A673 (cell line): ENCODE measurements at regions of chr5 and their contacts with region 1.

Region 1: DNA sequence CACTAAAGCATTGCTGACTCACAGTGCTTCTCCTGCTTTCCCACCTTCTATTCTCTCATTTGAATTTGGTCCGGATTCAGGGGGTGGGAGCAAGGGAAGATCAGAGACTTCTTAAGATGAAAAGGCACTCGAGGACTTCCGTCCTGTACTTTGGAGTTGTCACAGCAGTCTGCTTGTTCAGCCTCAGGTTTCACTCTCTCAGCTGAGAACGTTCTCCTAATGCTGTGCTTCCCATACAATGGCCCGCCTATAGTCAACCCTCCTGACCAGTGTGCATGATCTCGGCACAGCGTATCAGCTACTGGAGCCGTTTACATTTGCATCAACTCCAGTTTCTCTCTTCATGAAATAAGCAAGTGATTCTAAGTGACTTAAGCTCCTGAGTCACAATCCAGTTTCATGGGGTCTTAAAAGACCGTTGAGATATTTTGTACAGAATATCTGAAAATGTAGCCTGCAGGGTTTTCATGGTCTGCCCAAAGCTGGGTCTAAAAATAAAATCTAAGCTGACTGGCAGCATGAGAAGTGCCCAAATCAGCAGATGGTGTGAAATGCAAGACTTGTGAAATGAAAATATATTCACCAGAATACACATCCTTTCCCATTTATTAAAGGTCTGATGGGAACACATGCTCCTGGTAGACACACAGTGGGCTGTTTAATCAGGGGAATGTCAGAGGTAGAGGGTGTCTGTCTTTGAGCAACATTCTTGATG is 145.0 kb downstream of the ADCY2 start:
- DNase-seq: no peak
- H3K4me3 ChIP-seq: no peak overlapping the region
- H3K27ac ChIP-seq: no peak overlapping the region
- H3K4me1 ChIP-seq: no peaks in the 10 kb centered on the region
- H3K27me3 ChIP-seq: no peaks in the 10 kb centered on the region
- CTCF ChIP-seq: no peak

Region 2: GRCh38 chr5:7565559-7565958 is 24.6 kb after region 1 on chr5:
- CTCF ChIA-PET with region 1: no interaction called
- POLR2A ChIA-PET with region 1: interaction called, 11 read pairs
- intact Hi-C with region 1: no loop called
- DNase-seq: no peak
- H3K4me3 ChIP-seq: no peak overlapping the region
- H3K27ac ChIP-seq: no peak overlapping the region
- H3K4me1 ChIP-seq: no peaks in the 10 kb centered on the region
- H3K27me3 ChIP-seq: no peaks in the 10 kb centered on the region
- CTCF ChIP-seq: no peak